Activated B cell treated with CpG ODN at 0.5 μM for 24 hours (primary cell): ENCODE measurements at regions of chr3 and their contacts with region 1.

Region 1: DNA sequence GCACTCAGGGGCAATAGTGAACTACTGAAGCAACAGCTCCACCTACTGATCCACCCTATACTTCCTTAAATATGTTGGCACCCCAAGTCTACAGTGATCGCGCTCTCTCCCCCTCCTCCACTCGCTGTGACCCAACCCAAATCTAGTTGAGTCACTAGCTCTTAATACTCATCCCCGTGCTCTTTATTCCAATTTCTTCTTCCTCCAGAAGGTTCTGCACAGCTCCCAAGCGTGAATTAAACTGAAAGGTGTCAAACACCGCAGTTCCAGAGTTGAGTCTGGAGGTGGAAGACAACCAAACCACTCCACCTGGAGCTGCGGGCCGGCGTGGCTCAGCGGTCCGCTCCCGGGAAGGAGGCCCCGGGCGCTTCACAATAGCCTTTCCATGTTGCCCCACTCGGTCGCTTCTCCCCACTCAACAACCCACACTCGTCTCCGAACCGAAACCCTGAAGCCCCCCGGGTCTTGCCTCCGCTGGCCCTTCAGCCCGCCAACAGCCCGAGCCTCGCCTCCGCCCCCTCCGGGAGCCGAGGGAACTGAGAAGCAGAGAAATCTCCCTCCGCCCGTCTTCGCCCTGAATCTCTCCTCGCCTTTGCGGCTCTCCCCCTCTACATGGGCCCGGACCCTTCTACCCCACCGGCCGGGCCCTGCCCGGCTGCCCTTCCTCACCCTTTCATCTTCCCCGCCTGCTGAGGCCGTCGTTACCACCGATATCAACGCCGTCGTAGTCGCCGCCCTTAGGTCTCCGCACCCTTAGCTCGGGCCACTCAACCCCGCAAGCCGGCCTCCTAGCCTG is 578 bp downstream of the NAA50 start:
- DNase-seq: peak; percentile 70
- ATAC-seq: peak; percentile 63
- H3K4me3 Mint-ChIP-seq: peak overlapping the region; percentile 93
- H3K27ac Mint-ChIP-seq: peak overlapping the region; percentile 100
- H3K4me1 Mint-ChIP-seq: peaks cover 74% of the 10 kb centered on the region
- H3K27me3 Mint-ChIP-seq: no peaks in the 10 kb centered on the region
- CTCF ChIP-seq: no peak

Region 2: DNA sequence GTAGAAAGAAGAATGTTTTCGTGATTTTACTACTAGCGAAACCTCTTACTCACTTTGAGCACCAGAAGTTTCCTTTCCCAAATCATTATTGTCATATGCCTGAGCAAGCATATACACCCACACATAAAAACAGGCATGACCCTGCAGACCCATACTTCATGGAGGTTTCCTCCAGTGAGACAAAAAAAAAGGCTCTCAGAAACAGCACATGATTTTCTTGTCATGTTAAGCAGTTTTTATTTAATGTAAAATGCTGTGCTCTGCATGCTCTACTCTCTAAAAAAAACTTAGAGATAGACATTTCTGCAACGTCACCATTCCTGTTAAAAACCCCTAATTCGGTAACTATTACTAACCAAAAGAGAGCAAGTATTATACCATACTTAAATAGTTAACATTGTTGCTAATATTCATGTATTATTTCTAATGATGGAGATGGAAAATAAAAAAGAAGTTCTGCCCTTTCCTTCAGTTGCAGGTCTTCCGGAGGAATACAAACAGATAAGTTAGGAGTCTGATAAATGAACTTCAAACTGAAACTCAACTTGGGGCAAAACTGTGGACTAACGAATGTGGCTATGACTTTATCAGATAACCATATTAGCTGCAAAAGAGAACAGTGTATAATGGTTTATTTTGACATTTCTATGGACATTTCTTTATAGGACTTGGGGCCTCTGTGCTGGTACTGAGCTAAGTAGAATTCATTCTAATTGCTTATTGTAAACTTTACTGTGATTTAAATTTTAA is 786.5 kb before region 1 on chr3:
- CTCF ChIA-PET with region 1: no interaction called
- POLR2A ChIA-PET with region 1: no interaction called
- intact Hi-C with region 1: no loop called
- DNase-seq: no peak
- ATAC-seq: peak; percentile 42
- H3K4me3 Mint-ChIP-seq: peak overlapping the region; percentile 68
- H3K27ac Mint-ChIP-seq: peak overlapping the region; percentile 41
- H3K4me1 Mint-ChIP-seq: peaks cover 30% of the 10 kb centered on the region
- H3K27me3 Mint-ChIP-seq: no peaks in the 10 kb centered on the region
- CTCF ChIP-seq: no peak

Region 3: DNA sequence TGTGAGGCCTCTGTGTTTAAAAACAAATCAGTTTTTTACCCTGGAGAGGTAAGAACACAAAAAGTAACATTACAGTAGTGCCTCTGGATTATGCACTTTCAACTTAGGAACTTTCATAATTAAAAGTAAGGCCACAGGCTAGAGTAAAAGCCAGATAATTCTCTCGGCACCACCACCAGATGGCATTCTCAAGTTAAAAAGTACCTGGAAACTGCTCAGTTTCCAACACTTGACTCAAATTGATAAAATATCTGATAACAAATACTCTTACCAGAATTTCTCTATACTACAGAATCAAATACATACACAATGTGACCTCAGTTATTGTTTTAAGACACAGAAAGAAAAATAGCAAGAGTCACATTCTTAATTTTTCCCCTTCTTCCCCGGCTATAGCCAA is 250.4 kb before region 1 on chr3:
- CTCF ChIA-PET with region 1: interaction called, 12 read pairs
- POLR2A ChIA-PET with region 1: interaction called, 3 read pairs
- intact Hi-C with region 1: loop called (anchors 1 kb)
- DNase-seq: no peak
- ATAC-seq: no peak
- H3K4me3 Mint-ChIP-seq: no peak overlapping the region
- H3K27ac Mint-ChIP-seq: no peak overlapping the region
- H3K4me1 Mint-ChIP-seq: no peaks in the 10 kb centered on the region
- H3K27me3 Mint-ChIP-seq: no peaks in the 10 kb centered on the region
- CTCF ChIP-seq: no peak

Region 4: DNA sequence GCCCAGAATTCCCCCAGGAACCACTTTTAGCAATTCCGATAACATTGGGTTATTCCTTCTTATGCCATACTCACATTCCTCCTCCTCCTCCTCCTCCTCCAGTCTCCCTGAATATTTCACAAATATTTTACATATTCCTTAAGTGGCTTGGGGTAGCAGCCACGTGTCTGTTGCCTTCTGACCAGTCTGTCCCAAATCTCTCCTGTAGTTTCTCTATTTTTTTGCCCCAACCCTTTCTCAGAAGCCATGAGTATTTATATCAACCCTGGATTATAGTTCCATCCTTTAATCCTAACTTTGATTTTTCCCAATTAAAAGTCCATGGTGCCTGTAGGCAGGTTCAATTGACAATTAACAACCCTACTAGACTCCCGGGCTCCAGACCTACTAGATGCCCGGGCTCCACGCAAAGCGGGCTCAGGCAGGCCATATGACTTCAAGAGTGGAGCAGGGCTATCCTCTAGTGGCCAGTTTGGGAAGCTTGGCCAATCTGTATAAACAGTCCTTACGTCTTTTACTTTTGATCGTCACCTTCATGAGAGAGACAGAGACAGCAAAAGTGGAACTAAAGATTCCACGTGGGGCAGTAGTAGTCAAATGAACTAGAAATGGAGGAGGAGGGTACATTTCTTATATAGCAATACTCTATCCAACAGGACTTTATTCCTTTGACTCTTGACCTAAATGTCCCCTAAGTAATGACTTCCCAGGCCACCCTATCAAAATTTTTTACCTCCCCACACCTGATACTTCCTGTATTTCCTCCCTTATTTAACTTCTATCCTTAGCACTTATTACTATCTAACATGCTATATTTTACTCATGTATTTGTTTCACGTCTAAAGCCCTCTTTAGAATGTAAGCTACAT is 118.7 kb before region 1 on chr3:
- CTCF ChIA-PET with region 1: interaction called, 7 read pairs
- POLR2A ChIA-PET with region 1: interaction called, 3 read pairs
- intact Hi-C with region 1: loop called (anchors 2 kb)
- DNase-seq: no peak
- ATAC-seq: peak; percentile 90
- H3K4me3 Mint-ChIP-seq: peak overlapping the region; percentile 84
- H3K27ac Mint-ChIP-seq: peak overlapping the region; percentile 87
- H3K4me1 Mint-ChIP-seq: peaks cover 57% of the 10 kb centered on the region
- H3K27me3 Mint-ChIP-seq: no peaks in the 10 kb centered on the region
- CTCF ChIP-seq: no peak

Region 5: DNA sequence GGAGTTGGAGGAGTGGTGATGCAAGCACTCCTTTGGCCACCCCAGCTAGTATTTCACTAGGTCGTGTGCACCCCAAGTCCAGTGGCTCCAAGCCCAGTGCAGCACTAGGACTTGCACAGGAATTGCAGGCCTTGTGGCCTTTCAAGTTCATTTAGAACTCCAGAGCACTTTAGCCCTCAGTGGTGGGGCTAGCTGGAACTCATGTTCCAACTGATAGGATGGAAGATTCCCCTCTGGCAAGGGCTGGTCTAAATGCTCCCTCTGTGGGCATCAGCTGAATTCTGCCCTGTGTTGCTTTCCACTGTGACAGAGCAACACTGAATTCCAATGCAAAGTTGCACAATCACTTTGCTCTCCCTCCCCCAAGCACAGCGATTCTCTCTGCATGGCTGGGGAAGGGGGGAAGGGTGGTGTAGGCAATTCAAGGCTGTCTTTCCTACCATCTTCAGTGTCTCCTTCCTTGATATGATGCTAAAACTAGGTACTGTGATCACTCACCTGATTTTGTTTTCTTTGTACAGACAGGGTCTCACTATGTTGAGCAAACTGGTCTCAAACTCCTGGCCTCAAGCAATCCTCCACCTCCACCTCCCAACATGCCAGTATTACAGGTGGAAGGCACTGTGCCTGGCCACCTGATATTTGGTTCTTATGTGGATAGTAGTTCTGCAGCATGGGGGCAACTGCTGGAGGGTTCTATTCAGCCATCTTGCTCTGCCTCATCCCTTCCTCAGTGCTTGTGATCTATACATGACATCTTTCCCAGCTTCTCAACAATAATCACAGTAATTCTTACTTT is 59.3 kb before region 1 on chr3:
- CTCF ChIA-PET with region 1: no interaction called
- POLR2A ChIA-PET with region 1: no interaction called
- intact Hi-C with region 1: no loop called
- DNase-seq: no peak
- ATAC-seq: no peak
- H3K4me3 Mint-ChIP-seq: no peak overlapping the region
- H3K27ac Mint-ChIP-seq: no peak overlapping the region
- H3K4me1 Mint-ChIP-seq: peaks cover 26% of the 10 kb centered on the region
- H3K27me3 Mint-ChIP-seq: no peaks in the 10 kb centered on the region
- CTCF ChIP-seq: no peak

Region 6: DNA sequence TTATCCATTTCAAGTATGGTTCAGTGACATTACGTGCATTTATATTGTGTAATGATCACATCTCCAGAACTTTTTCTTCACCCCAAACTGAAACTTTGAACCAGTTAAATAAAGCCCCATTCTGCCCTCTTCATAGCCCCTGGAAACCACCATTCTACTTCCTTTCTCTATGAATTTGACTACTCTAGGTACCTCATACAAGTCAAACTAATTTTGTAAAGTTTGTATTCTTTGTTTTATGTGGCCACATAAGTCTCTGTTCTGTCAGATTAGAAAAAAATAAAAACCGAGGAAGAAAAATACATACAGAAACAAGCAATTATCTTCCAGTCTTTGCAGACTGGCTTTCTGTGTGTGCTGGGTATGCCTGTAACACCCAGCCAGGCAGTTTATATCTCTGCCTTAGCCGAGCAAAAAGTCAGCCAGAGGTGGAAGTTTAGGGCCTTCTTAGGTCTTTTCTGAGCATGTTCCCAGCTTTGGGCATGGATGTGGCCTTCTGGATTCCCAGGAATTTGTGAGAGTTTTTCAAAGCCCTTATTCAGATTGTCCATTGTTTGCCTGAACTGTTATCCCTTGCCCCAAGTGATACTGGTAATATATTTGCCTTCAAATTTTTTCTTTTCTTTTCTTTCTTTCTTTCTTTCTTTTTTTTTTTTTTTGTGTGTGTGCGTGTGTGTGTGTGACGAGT is 87.2 kb after region 1 on chr3:
- CTCF ChIA-PET with region 1: interaction called, 3 read pairs
- POLR2A ChIA-PET with region 1: interaction called, 50 read pairs
- intact Hi-C with region 1: no loop called
- DNase-seq: no peak
- ATAC-seq: peak; percentile 29
- H3K4me3 Mint-ChIP-seq: peak overlapping the region; percentile 61
- H3K27ac Mint-ChIP-seq: peak overlapping the region; percentile 72
- H3K4me1 Mint-ChIP-seq: peaks cover 67% of the 10 kb centered on the region
- H3K27me3 Mint-ChIP-seq: no peaks in the 10 kb centered on the region
- CTCF ChIP-seq: no peak

Region 7: GRCh38 chr3:113852506-113852905 is 107.0 kb after region 1 on chr3:
- CTCF ChIA-PET with region 1: no interaction called
- POLR2A ChIA-PET with region 1: no interaction called
- intact Hi-C with region 1: no loop called
- DNase-seq: no peak
- ATAC-seq: no peak
- H3K4me3 Mint-ChIP-seq: no peak overlapping the region
- H3K27ac Mint-ChIP-seq: no peak overlapping the region
- H3K4me1 Mint-ChIP-seq: no peaks in the 10 kb centered on the region
- H3K27me3 Mint-ChIP-seq: no peaks in the 10 kb centered on the region
- CTCF ChIP-seq: no peak

Region 8: DNA sequence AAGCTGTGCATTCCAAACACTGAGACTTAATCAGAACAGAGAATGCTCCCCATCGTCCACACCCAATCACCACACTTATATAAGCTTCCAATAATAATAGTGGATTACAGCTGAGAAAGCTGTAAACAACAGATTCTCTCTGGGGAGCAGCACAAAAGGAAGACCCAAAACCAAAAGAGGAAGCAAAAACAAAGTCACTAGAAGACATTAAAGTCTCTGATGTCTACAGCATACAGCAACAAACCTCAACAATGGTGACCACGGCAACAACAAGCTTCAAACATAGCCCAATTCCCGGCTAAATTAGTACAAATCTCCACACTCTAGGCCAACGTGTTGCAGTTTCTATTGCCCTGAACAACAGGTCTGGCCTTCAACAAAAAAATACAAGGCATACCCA is 240.1 kb after region 1 on chr3:
- CTCF ChIA-PET with region 1: no interaction called
- POLR2A ChIA-PET with region 1: no interaction called
- intact Hi-C with region 1: loop called (anchors 1 kb)
- DNase-seq: no peak
- ATAC-seq: peak; percentile 89
- H3K4me3 Mint-ChIP-seq: peak overlapping the region; percentile 56
- H3K27ac Mint-ChIP-seq: peak overlapping the region; percentile 88
- H3K4me1 Mint-ChIP-seq: peaks cover 57% of the 10 kb centered on the region
- H3K27me3 Mint-ChIP-seq: no peaks in the 10 kb centered on the region
- CTCF ChIP-seq: no peak

Region 9: GRCh38 chr3:114454551-114455251 is 709.2 kb after region 1 on chr3:
- CTCF ChIA-PET with region 1: no interaction called
- POLR2A ChIA-PET with region 1: no interaction called
- intact Hi-C with region 1: loop called (anchors 5 kb)
- DNase-seq: no peak
- ATAC-seq: peak; percentile 43
- H3K4me3 Mint-ChIP-seq: no peak overlapping the region
- H3K27ac Mint-ChIP-seq: no peak overlapping the region
- H3K4me1 Mint-ChIP-seq: peaks cover 52% of the 10 kb centered on the region
- H3K27me3 Mint-ChIP-seq: no peaks in the 10 kb centered on the region
- CTCF ChIP-seq: no peak